Caco-2 (cell line): ENCODE measurements at regions of chr10 and their contacts with region 1.

Region 1: GRCh38 chr10:86399879-86400704 is 33.5 kb upstream of the GRID1 start:
- DNase-seq: peak; percentile 95 to 97
- H3K4me3 ChIP-seq: peak overlapping the region; percentile 57
- H3K4me3 Mint-ChIP-seq: peak overlapping the region; percentile 78
- H3K27ac Mint-ChIP-seq: no peak overlapping the region
- H3K4me1 ChIP-seq: peaks cover 4% of the 10 kb centered on the region
- H3K4me1 Mint-ChIP-seq: peaks cover 18% of the 10 kb centered on the region
- H3K27me3 ChIP-seq: no peaks in the 10 kb centered on the region
- H3K27me3 Mint-ChIP-seq: peaks cover 9% of the 10 kb centered on the region
- CTCF ChIP-seq: peak; percentile 92 to 96

Region 2: DNA sequence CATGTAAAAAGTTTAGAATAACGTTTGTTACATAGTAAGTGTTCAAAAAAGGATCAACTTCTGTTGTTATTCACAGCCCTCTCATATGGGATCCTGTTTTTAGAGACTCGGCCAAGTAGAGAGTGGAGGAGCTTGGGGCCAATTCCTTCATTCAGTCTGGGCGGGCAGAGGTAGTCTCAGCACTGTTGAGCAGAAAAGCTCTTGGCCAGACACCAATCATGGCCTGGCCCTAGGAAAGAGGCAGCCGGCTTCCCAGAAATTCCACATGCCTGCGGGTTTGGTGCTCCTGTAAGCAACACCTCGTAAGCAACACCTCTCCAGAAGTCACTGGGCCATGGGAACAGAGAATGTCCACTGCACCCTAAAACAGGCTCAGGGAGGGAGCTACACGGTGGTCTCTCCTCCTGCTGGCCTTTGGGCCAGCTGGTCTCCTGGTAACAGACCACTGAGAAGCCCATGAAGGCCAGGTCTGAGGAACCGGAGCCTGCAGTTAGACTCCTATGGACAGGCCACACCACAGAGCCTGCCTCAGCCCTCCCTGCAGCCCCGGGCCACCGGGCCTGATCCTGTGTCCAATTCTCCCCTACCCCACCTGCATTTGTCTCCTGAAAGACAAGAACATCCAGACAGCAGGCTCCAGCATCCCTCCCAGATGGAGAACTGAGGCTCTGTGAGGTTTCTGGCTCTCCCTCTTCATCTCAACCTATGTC is 182.6 kb before region 1 on chr10:
- CTCF ChIA-PET with region 1: no interaction called
- POLR2A ChIA-PET with region 1: no interaction called
- intact Hi-C with region 1: no loop called
- DNase-seq: no peak
- H3K4me3 ChIP-seq: no peak overlapping the region
- H3K4me3 Mint-ChIP-seq: no peak overlapping the region
- H3K27ac Mint-ChIP-seq: no peak overlapping the region
- H3K4me1 ChIP-seq: no peaks in the 10 kb centered on the region
- H3K4me1 Mint-ChIP-seq: no peaks in the 10 kb centered on the region
- H3K27me3 ChIP-seq: no peaks in the 10 kb centered on the region
- H3K27me3 Mint-ChIP-seq: peaks cover 19% of the 10 kb centered on the region
- CTCF ChIP-seq: no peak

Region 3: DNA sequence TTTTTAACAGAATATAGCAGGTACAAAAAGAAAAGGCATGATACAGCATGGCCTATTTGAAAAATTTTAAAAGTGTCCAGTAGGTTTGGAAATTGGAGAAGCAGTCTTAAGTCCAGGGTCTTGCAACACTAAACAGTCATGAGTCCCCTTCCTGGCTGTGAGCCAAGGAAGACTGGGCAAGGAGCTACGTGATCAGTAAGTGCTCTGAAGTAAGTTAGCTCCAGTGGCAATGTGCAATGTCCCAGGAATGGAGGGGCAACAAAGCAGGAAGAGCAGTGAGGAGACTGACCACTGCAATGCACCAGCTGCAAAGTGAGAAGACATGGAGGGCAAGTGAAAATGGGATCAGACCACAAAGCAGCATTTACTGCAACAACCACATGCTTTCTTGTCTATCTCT is 39.5 kb after region 1 on chr10:
- CTCF ChIA-PET with region 1: interaction called, 5 read pairs
- POLR2A ChIA-PET with region 1: no interaction called
- intact Hi-C with region 1: loop called (anchors 2 kb)
- DNase-seq: no peak
- H3K4me3 ChIP-seq: no peak overlapping the region
- H3K4me3 Mint-ChIP-seq: no peak overlapping the region
- H3K27ac Mint-ChIP-seq: peak overlapping the region; percentile 33
- H3K4me1 ChIP-seq: peaks cover 13% of the 10 kb centered on the region; the same call in 1 of the 2 replicates
- H3K4me1 Mint-ChIP-seq: peaks cover 18% of the 10 kb centered on the region
- H3K27me3 ChIP-seq: no peaks in the 10 kb centered on the region
- H3K27me3 Mint-ChIP-seq: no peaks in the 10 kb centered on the region
- CTCF ChIP-seq: no peak

Region 4: DNA sequence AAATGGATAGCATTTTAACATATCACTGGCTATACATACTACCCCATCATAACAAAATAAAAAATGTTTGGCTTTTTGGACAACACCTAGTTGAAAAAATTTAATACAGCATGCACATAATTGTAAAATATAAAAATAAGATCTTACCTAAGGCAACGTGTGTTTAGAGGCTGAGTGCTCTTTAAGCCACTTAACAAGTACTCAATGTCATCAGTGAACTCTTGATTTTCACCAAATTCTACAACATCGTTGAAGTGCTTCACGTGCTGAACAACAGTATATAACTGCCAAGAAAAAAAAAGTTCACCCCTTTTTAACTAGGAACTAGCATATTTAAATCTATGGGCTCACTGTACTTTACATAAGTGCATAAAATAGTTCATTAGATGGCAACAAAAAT is 72.0 kb after region 1 on chr10:
- CTCF ChIA-PET with region 1: interaction called, 4 read pairs
- POLR2A ChIA-PET with region 1: no interaction called
- intact Hi-C with region 1: loop called (anchors 5 kb)
- DNase-seq: no peak
- H3K4me3 ChIP-seq: no peak overlapping the region
- H3K4me3 Mint-ChIP-seq: no peak overlapping the region
- H3K27ac Mint-ChIP-seq: no peak overlapping the region
- H3K4me1 ChIP-seq: peaks cover 14% of the 10 kb centered on the region
- H3K4me1 Mint-ChIP-seq: peaks cover 8% of the 10 kb centered on the region
- H3K27me3 ChIP-seq: no peaks in the 10 kb centered on the region
- H3K27me3 Mint-ChIP-seq: no peaks in the 10 kb centered on the region
- CTCF ChIP-seq: no peak

Region 5: DNA sequence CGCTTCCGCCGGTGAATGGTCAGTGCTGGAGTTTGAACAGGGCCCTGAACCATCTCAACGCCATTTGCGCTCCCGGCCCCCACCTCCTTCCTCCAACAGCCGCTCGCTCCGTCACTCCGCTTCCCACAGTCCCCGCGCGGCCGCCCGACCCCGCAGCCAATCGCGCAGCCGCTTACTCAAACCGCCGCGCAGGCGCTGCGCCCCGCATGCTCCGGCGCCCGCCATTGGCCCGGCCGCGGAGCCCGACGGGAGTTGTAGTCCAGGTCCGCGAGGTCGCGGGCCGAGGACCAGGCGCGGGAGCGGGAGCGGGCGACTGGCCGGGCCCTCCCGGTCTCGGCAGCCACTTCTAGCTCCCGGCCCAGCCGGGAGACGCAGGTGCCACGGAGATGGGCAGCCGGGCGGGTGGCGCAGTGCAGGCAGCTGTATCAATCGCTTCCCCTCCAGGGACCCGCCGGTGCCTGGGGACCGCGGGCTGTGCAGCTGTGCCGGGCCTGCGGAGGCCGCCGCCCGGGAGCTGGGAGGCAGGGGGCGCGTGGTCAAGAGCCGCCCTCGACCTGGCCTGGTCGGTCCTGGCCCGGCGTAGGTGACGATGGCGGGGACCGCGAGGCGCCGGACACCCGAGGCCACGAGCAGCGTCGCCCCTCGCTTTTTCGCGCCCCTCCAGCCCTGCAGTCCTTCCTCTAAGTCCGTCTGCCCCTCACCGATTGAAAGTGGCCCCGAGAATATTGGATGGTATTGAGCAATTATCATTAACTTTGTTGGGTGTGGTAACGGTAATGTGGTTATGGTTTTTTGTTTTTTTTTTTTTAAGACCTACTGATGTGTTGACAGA is 121.8 kb after region 1 on chr10 and contains the start of gene WAPL:
- CTCF ChIA-PET with region 1: interaction called, 6 read pairs
- POLR2A ChIA-PET with region 1: interaction called, 7 read pairs
- intact Hi-C with region 1: loop called (anchors 1 kb)
- DNase-seq: peak; percentile 92 to 98
- H3K4me3 ChIP-seq: peak within 1 kb of the TSS; percentile 99
- H3K4me3 Mint-ChIP-seq: peak within 1 kb of the TSS; percentile 98
- H3K27ac Mint-ChIP-seq: peak within 1 kb of the TSS; percentile 94
- H3K4me1 ChIP-seq: peaks cover 16% of the 10 kb centered on the region
- H3K4me1 Mint-ChIP-seq: peaks cover 16% of the 10 kb centered on the region
- H3K27me3 ChIP-seq: no peaks in the 10 kb centered on the region
- H3K27me3 Mint-ChIP-seq: no peaks in the 10 kb centered on the region
- CTCF ChIP-seq: no peak
- total RNA-seq, gene WAPL: 48.4 and 49.2 TPM in 2 replicates

Region 6: GRCh38 chr10:86585037-86585725 is 185.1 kb after region 1 on chr10:
- CTCF ChIA-PET with region 1: interaction called, 52 read pairs
- POLR2A ChIA-PET with region 1: interaction called, 5 read pairs
- intact Hi-C with region 1: loop called (anchors 1 kb)
- DNase-seq: peak; percentile 68 to 81
- H3K4me3 ChIP-seq: no peak overlapping the region
- H3K4me3 Mint-ChIP-seq: no peak overlapping the region
- H3K27ac Mint-ChIP-seq: no peak overlapping the region
- H3K4me1 ChIP-seq: no peaks in the 10 kb centered on the region
- H3K4me1 Mint-ChIP-seq: no peaks in the 10 kb centered on the region
- H3K27me3 ChIP-seq: no peaks in the 10 kb centered on the region
- H3K27me3 Mint-ChIP-seq: no peaks in the 10 kb centered on the region
- CTCF ChIP-seq: peak; percentile 94

Region 7: GRCh38 chr10:86644152-86644793 is 244.2 kb after region 1 on chr10:
- CTCF ChIA-PET with region 1: no interaction called
- POLR2A ChIA-PET with region 1: no interaction called
- intact Hi-C with region 1: loop called (anchors 2 kb)
- DNase-seq: peak in 1 of 2 experiments; percentile 32
- H3K4me3 ChIP-seq: no peak overlapping the region
- H3K4me3 Mint-ChIP-seq: no peak overlapping the region
- H3K27ac Mint-ChIP-seq: no peak overlapping the region
- H3K4me1 ChIP-seq: no peaks in the 10 kb centered on the region
- H3K4me1 Mint-ChIP-seq: no peaks in the 10 kb centered on the region
- H3K27me3 ChIP-seq: no peaks in the 10 kb centered on the region
- H3K27me3 Mint-ChIP-seq: peaks cover 2% of the 10 kb centered on the region
- CTCF ChIP-seq: peak; percentile 44 to 78

Region 8: GRCh38 chr10:86688398-86688921 is 288.4 kb after region 1 on chr10:
- CTCF ChIA-PET with region 1: interaction called, 9 read pairs
- POLR2A ChIA-PET with region 1: no interaction called
- intact Hi-C with region 1: loop called (anchors 10 kb)
- DNase-seq: peak; percentile 62 to 67
- H3K4me3 ChIP-seq: no peak overlapping the region
- H3K4me3 Mint-ChIP-seq: no peak overlapping the region
- H3K27ac Mint-ChIP-seq: no peak overlapping the region
- H3K4me1 ChIP-seq: no peaks in the 10 kb centered on the region
- H3K4me1 Mint-ChIP-seq: no peaks in the 10 kb centered on the region
- H3K27me3 ChIP-seq: no peaks in the 10 kb centered on the region
- H3K27me3 Mint-ChIP-seq: peaks cover 3% of the 10 kb centered on the region
- CTCF ChIP-seq: peak; percentile 83 to 92